HEK293T (cell line): ENCODE measurements at regions of chr1 and their contacts with region 1.

Region 1: DNA sequence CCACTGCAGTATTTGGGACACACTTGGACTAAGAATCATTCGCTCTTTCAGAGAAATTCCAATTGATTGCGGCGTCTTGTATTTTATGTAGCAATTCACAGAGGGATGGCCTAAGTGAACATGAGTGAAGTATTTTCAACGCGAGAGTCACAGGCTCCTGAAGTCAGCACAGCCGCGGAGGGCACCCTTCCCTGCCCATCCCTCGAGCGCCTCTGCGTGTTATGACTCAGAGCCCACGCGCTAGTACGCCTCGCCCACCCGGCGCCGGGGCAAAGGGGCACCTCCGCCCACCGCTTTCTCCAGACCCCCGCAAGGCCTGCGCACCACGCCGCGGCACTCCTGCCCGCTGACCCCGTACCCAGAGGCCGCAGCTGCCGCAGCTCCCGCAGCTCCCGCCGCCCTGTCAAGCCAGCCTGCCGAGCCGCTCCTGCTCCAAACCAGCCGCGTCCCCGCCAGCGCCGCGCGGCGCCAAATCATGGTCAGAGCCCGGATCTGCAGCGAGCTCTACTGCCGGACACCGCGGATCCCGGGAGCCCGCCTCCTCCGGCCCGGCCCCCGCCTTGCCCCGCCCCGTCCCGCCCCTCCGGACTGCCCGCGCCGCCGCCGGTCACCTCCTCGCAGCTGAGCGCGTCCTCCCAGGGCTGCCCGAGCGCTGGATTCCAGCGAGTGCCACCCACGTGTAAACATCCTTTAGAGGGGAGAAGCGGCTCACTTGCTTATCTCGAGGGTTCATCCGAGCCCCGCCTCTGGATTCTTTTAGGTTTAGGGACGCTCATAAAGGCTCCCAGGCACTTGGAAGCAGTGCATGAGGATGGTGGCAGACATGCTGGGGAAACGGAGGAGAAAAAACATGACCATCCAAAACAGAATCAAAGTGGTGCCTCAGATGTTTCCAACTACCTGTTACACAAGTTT is at the start of gene GLRX2:
- DNase-seq: peak; percentile 91

Region 2: GRCh38 chr1:193094112-193094511 is 11.1 kb before region 1 on chr1:
- CTCF ChIA-PET with region 1: no interaction called
- POLR2A ChIA-PET with region 1: interaction called, 10 read pairs
- DNase-seq: no peak

Region 3: DNA sequence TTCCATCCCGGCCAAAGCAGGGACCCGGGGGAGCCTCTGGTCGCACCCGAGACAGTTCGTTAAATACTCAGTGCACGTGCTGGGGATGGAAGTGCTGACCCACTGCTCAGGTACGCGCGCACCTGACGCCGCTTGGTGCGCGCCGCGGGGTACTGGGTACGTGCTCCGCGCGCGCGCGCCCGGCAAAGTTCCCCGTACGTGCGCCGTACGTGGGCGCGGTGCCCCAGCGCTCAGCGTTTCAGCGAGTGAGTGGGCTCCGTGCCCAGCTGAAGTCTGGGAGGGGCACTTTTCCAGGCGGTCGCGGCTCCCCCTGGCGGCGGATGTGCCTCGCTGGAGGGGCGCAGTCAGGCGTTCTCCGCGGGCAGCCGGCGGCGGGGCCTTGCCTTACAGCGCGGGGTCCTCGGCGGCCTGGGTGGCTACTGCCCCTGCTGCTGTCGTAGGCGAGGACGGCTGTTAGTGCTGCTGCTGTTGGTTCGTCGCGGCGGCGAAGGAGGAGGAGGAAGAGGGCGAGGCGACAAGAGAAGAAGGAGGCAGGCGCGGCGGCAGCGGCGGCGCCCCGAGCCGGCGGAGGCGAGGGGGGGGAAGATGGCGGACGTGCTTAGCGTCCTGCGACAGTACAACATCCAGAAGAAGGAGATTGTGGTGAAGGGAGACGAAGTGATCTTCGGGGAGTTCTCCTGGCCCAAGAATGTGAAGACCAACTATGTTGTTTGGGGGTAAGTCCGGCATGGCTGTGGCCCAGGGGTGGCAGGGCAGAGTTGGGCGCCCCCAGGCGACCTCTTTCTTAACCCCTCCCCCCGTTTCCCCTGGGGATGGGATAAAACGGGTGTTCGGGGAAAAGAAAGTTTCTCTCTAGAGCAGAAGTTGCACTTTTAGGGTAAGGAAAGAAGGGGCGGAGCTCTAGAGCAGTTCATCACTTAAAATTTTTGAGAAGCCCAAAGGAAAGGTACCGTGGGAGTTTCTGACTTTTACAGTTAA is 16.7 kb after region 1 on chr1 and contains the start of gene CDC73:
- CTCF ChIA-PET with region 1: interaction called, 3 read pairs
- POLR2A ChIA-PET with region 1: interaction called, 21 read pairs
- DNase-seq: peak; percentile 93

Region 4: GRCh38 chr1:193183019-193183627 is 78.0 kb after region 1 on chr1:
- CTCF ChIA-PET with region 1: no interaction called
- POLR2A ChIA-PET with region 1: no interaction called
- DNase-seq: peak; percentile 14

Region 5: GRCh38 chr1:193201021-193201420 is 95.9 kb after region 1 on chr1:
- CTCF ChIA-PET with region 1: no interaction called
- POLR2A ChIA-PET with region 1: no interaction called
- DNase-seq: no peak